PC-3 (cell line): ENCODE measurements at regions of chr18 and their contacts with region 1.

Region 1: GRCh38 chr18:12032786-12033642 is 51.7 kb downstream of the IMPA2 start:
- DNase-seq: peak; percentile 18
- ATAC-seq: peak; percentile 67
- H3K4me3 ChIP-seq: no peak overlapping the region
- H3K27ac ChIP-seq: no peak overlapping the region
- H3K4me1 ChIP-seq: no peaks in the 10 kb centered on the region
- H3K27me3 ChIP-seq: no peaks in the 10 kb centered on the region
- CTCF ChIP-seq: no peak

Region 2: GRCh38 chr18:12005538-12006487 is 27.2 kb before region 1 on chr18:
- CTCF ChIA-PET with region 1: no interaction called
- POLR2A ChIA-PET with region 1: interaction called, 3 read pairs
- intact Hi-C with region 1: loop called (anchors 1 kb)
- DNase-seq: peak; percentile 94
- ATAC-seq: peak; percentile 84
- H3K4me3 ChIP-seq: peak overlapping the region; percentile 54
- H3K27ac ChIP-seq: peak overlapping the region; percentile 99
- H3K4me1 ChIP-seq: peaks cover 34% of the 10 kb centered on the region
- H3K27me3 ChIP-seq: no peaks in the 10 kb centered on the region
- CTCF ChIP-seq: no peak